ENCODE measurements at regions of chr2 and their contacts with region 1.

Region 1: GRCh38 chr2:142980561-142981378 is 103.3 kb downstream of the KYNU start:
- DNase-seq: no peak
- ATAC-seq: no peak
- H3K4me3 ChIP-seq: no peak overlapping the region
- H3K27ac ChIP-seq: no peak overlapping the region
- H3K4me1 ChIP-seq: no peaks in the 10 kb centered on the region
- H3K27me3 ChIP-seq: peaks cover 0 to 6% (median 0%) of the 10 kb centered on the region in 7 donors
- CTCF ChIP-seq: peak; percentile 12 to 78 (median 60)

Region 2: DNA sequence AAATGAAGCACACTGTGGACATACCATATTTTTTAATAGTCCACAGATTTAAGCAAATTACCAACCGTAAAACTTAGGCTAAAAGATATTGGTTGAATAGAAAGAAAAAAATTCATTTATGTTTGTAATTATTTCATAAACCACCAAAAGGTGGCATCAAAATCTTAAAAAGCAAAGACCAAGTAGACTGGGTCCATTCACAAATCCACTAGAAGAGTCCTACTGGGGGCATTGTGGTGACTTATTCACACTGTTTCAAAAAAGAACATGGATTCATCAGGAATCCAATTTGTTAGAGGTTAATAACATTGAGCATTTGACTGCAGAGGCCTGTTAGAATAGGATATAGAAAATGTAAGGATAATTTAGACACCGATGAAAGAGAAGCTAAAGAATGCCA is 298.2 kb before region 1 on chr2:
- intact Hi-C with region 1: loop called in 8 of 10 experiments (anchors 5 to 10 kb)
- DNase-seq: no peak
- ATAC-seq: no peak
- H3K4me3 ChIP-seq: no peak overlapping the region
- H3K27ac ChIP-seq: no peak overlapping the region
- H3K4me1 ChIP-seq: no peaks in the 10 kb centered on the region
- H3K27me3 ChIP-seq: peaks cover 0 to 5% (median 0%) of the 10 kb centered on the region in 7 donors
- CTCF ChIP-seq: peak in 5 of 9 donors; percentile 18 to 53 (median 28)

Region 3: DNA sequence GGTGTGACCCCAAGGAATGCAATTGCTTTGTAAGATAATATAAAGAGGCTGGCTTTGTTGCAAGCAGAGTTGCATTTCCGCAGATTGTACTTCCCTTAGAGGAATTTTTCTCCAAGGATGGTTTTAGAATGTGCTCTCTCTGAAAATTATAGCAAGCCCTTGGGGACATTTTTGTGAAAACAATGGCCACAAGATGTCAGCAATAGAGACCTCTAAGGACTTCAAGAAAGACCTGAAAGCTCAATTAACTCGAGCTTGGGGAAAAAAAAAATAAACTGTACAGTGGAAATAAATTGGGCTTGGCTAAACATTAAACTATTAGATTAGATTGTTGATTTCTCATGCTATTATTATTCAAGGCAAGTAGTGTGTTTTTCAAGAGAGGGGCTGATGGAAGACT is 184.6 kb before region 1 on chr2:
- intact Hi-C with region 1: loop called in 2 of 10 experiments (anchors 5 to 10 kb)
- DNase-seq: no peak
- ATAC-seq: peak in 1 of 8 donors; percentile 39
- H3K4me3 ChIP-seq: no peak overlapping the region
- H3K27ac ChIP-seq: peak overlapping the region in 1 of 10 donors; percentile 19
- H3K4me1 ChIP-seq: peaks cover 0 to 7% (median 0%) of the 10 kb centered on the region in 9 donors
- H3K27me3 ChIP-seq: no peaks in the 10 kb centered on the region
- CTCF ChIP-seq: peak in 3 of 9 donors; percentile 18 to 48 (median 21)

Region 4: GRCh38 chr2:142914507-142915313 is 66.1 kb before region 1 on chr2:
- intact Hi-C with region 1: no loop called
- DNase-seq: no peak
- ATAC-seq: no peak
- H3K4me3 ChIP-seq: no peak overlapping the region
- H3K27ac ChIP-seq: no peak overlapping the region
- H3K4me1 ChIP-seq: no peaks in the 10 kb centered on the region
- H3K27me3 ChIP-seq: no peaks in the 10 kb centered on the region
- CTCF ChIP-seq: no peak

Region 5: GRCh38 chr2:143088388-143088787 is 107.6 kb after region 1 on chr2:
- intact Hi-C with region 1: no loop called
- DNase-seq: no peak
- ATAC-seq: no peak
- H3K4me3 ChIP-seq: no peak overlapping the region
- H3K27ac ChIP-seq: no peak overlapping the region
- H3K4me1 ChIP-seq: peaks cover 0 to 12% (median 0%) of the 10 kb centered on the region in 9 donors
- H3K27me3 ChIP-seq: no peaks in the 10 kb centered on the region
- CTCF ChIP-seq: no peak